Gastrocnemius medialis (tissue), 4 donors: ENCODE measurements at regions of chr13 and their contacts with region 1.

Region 1: DNA sequence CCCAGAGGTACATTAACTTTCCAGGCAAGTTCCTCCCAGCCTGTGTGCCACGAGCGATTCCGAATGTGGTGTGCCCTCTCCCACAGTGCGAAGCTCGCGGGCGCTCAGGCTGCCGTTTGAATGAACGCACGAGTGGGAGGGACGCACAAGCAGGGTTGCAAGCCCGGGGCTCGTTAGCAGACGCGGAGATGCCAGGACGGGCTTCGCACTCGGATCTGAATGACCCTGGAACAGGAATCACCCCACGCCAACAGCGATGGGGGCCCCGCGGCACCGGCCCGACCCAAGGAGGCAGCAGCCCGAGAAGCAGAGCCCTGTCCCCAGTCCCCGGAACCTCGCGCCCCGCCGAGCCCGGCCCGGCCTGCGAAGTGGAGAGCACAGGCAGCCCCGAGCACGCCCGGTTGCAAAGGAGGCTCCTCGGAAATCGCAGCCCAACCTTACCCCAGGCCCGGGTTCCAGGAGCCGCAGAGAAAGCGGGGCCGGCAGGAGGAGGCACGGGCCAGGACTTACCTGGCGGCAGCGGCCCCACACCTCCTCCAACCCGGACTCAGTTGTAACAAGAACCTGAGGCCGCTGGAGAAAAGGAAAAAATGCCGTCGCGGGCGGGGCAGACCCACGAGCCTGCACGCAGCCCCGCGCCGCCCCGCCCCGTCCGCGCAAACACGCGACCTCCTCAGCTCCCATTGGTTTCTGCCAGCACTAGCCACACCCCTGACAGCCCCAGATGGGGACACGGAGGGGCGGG is at the start of gene SLC25A30:
- DNase-seq: peak; percentile 96 to 98
- ATAC-seq: peak; percentile 88 to 92
- H3K4me3 ChIP-seq: peak within 1 kb of the TSS; percentile 78 to 91 (median 85)
- H3K27ac ChIP-seq: peak within 1 kb of the TSS; percentile 91 to 99 (median 94)
- H3K4me1 ChIP-seq: peaks cover 32 to 39% of the 10 kb centered on the region in 2 donors
- H3K27me3 ChIP-seq: no peaks in the 10 kb centered on the region
- CTCF ChIP-seq: no peak
- POLR2A ChIP-seq: peak; percentile 88 to 95
- total RNA-seq, gene SLC25A30: 4.2 to 27.1 (median 14.6) TPM

Region 2: GRCh38 chr13:45340926-45341750 is 76.8 kb before region 1 on chr13 and contains the start of gene TPT1:
- in situ Hi-C with region 1: no loop called
- intact Hi-C with region 1: loop called (anchors 1 kb)
- DNase-seq: peak; percentile 99 to 100
- ATAC-seq: peak; percentile 78 to 84
- H3K4me3 ChIP-seq: peak within 1 kb of the TSS; percentile 73 to 100 (median 90)
- H3K27ac ChIP-seq: peak within 1 kb of the TSS; percentile 97 to 100 (median 99)
- H3K4me1 ChIP-seq: peaks cover 36 to 51% of the 10 kb centered on the region in 2 donors
- H3K27me3 ChIP-seq: no peaks in the 10 kb centered on the region
- CTCF ChIP-seq: peak in 1 of 5 experiments; percentile 11
- POLR2A ChIP-seq: peak; percentile 95 to 97
- total RNA-seq, gene TPT1: 4,595 to 7,577 (median 5,951) TPM

Region 3: GRCh38 chr13:45434556-45435371 is 16.8 kb after region 1 on chr13:
- in situ Hi-C with region 1: no loop called
- intact Hi-C with region 1: no loop called
- DNase-seq: no peak
- ATAC-seq: no peak
- H3K4me3 ChIP-seq: no peak overlapping the region
- H3K27ac ChIP-seq: peak overlapping the region in 1 of 4 donors; percentile 5
- H3K4me1 ChIP-seq: peaks cover 12 to 13% of the 10 kb centered on the region in 2 donors
- H3K27me3 ChIP-seq: no peaks in the 10 kb centered on the region
- CTCF ChIP-seq: no peak
- POLR2A ChIP-seq: no peak